Heart right ventricle (tissue), 16 donors: ENCODE measurements at regions of chrX and their contacts with region 1.

Region 1: DNA sequence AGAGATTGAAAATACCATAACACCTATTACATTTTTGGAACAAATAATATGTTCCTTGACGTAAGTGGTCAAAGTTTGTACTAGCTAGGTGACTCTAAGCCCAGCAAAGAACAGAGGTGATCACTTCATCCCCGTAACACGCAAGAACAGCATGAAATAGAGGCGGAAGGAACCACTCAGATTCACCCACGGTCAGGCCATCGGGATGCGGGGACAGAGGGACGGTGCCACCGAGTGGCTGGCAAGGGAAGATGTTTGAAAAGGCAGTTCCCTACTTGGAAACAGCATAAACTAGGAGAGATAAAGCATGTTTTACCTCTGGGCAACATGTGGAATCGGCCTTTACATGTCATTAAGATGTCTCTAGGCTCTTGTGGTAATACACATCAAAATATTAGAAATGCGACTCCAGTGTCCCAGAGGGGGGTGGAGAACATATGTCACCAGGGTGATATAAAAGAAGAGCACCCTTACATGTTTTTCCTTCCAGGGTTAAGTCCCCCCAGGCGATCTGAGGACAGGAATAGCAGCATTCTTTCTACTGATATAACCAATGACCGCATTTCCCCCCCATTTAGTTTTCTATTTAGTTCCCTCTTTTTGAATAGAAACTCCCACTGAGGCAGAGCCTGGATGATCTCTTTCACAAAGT is 84.0 kb downstream of the PHKA2 start:
- DNase-seq: no peak
- ATAC-seq: peak in 1 of 8 donors; percentile 43
- H3K4me3 ChIP-seq: no peak overlapping the region
- H3K27ac ChIP-seq: no peak overlapping the region
- H3K4me1 ChIP-seq: peaks cover 0 to 16% (median 7%) of the 10 kb centered on the region in 9 donors
- H3K27me3 ChIP-seq: no peaks in the 10 kb centered on the region
- CTCF ChIP-seq: peak; percentile 9 to 57 (median 38)

Region 2: DNA sequence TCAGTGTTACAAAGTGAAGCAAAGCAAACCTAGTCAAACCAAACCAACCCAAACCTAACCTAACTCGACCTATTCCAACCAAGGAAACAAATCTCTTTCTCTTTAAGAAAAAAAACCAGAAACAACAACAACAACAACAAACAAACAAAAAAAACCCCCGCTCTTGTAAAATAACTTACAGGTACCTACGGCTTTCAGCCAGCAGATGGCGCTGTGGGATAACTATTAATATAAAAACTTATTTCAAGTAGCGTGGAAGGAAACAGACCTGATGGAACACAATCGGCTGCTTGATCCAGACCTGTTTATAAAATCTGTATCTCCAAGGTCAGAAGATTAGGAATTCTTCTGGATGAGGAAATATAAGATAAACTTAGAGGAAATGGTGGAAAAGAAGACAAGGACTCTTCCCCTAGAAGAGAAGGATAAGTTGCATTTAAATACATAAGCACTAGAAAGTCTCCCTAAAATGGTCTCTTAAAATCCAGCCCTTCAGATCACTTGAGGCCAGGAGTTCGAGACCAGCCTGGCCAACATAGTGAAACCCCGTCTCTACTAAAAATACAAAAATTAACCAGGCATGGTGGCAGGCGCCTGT is 508.9 kb before region 1 on chrX:
- intact Hi-C with region 1: loop called in 3 of 10 experiments (anchors 5 to 10 kb)
- DNase-seq: peak; percentile 26 to 36
- ATAC-seq: no peak
- H3K4me3 ChIP-seq: no peak overlapping the region
- H3K27ac ChIP-seq: no peak overlapping the region
- H3K4me1 ChIP-seq: no peaks in the 10 kb centered on the region
- H3K27me3 ChIP-seq: no peaks in the 10 kb centered on the region
- CTCF ChIP-seq: peak; percentile 47 to 81 (median 71)

Region 3: GRCh38 chrX:18401848-18402213 is 498.1 kb before region 1 on chrX:
- intact Hi-C with region 1: loop called in 5 of 10 experiments (anchors 5 to 10 kb)
- DNase-seq: no peak
- ATAC-seq: no peak
- H3K4me3 ChIP-seq: no peak overlapping the region
- H3K27ac ChIP-seq: no peak overlapping the region
- H3K4me1 ChIP-seq: no peaks in the 10 kb centered on the region
- H3K27me3 ChIP-seq: no peaks in the 10 kb centered on the region
- CTCF ChIP-seq: no peak

Region 4: DNA sequence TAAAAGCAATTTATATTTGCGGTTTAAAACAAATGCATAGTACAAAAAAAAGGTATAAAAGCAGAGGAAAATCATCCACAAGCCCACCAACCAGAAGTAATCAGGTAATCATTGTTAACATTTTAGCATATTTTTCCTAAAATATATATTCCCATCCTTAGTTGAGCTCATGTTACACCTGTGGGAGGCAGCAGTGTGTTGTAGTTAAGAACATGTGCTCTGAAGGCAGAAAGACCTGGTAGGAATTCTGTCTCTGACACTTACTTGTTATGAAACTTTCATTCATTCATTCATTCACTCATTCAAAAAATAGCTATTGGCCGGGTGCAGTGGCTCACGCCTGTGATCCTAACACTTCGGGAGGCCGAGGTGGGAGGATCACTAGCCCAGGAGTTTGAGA is 489.9 kb before region 1 on chrX:
- intact Hi-C with region 1: loop called in 7 of 10 experiments (anchors 5 to 10 kb)
- DNase-seq: no peak
- ATAC-seq: peak in 1 of 8 donors; percentile 28
- H3K4me3 ChIP-seq: no peak overlapping the region
- H3K27ac ChIP-seq: no peak overlapping the region
- H3K4me1 ChIP-seq: no peaks in the 10 kb centered on the region
- H3K27me3 ChIP-seq: peaks cover 0 to 5% (median 0%) of the 10 kb centered on the region in 7 donors
- CTCF ChIP-seq: peak in 6 of 9 donors; percentile 23 to 48 (median 46)

Region 5: GRCh38 chrX:18415386-18415785 is 484.5 kb before region 1 on chrX:
- intact Hi-C with region 1: loop called in 6 of 10 experiments (anchors 5 to 10 kb)
- DNase-seq: no peak
- ATAC-seq: no peak
- H3K4me3 ChIP-seq: no peak overlapping the region
- H3K27ac ChIP-seq: no peak overlapping the region
- H3K4me1 ChIP-seq: no peaks in the 10 kb centered on the region
- H3K27me3 ChIP-seq: peaks cover 0 to 9% (median 0%) of the 10 kb centered on the region in 7 donors
- CTCF ChIP-seq: no peak

Region 6: DNA sequence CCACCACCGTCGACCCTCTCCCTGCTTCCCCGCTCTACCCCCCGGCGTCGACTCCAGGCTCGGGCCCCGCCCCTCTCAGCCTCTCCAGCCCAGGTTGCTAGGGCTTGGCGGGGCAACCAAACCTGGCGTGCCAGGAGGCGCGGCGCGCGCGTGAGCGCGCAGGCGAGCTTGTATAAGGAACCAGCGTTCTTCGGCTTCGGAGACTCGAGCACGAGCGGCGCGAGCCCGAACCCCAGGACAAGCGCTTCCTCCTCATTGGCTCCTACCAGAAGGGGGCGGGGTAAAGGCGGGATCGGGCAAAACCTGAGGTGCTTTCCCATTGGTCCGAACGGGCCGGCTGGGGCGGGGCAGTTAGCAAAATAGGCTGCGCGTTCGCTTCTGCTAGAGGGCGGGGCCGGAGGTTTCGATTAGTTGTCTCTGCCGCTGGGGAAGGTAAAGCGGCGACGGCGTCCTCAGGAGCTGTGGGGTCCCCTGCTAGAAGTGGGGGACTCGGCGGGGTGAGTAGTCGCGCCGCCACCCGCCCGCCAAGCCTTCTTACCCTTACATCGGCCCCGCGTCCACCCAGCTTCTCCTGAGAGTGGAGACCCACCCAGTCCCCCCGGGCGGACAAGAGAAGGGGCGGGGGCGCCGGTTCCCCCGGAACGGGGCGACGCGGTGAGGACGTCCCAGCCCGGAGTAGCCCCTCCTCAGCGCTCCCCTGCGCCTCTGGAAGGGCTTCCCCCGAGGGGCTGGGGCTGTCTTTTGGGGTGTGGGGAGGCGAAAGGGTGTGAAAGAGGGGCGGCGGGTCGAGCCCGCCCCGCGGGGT is 474.5 kb before region 1 on chrX and contains the start of gene CDKL5:
- intact Hi-C with region 1: loop called in 1 of 10 experiments (anchors 5 kb)
- DNase-seq: peak; percentile 95 to 97
- ATAC-seq: peak; percentile 97 to 99 (median 98)
- H3K4me3 ChIP-seq: peak within 1 kb of the TSS; percentile 65 to 92 (median 80)
- H3K27ac ChIP-seq: peak within 1 kb of the TSS; percentile 64 to 87 (median 80)
- H3K4me1 ChIP-seq: peaks cover 0 to 20% (median 0%) of the 10 kb centered on the region in 9 donors
- H3K27me3 ChIP-seq: peaks cover 0 to 61% (median 0%) of the 10 kb centered on the region in 7 donors
- CTCF ChIP-seq: peak in 1 of 9 donors; percentile 18
- total RNA-seq, gene CDKL5: 9.2 to 12.6 (median 10.0) TPM

Region 7: DNA sequence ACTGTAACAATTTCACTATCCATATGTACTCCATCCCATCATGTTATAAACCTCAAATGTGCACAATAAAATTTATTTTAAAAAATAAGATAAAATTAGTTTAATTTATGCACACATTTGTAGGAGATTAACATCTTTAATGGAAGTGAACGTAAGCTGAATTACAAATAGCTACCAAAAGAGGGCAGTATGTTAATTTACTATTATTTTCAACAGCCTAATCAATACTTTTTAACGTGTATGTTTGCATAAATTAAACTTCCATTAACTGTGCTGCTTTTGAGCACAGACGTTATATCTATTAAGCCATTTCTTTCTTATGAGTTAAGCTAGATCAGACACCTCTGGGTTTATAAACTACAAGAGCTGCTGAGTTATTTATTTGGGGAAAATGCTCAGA is 140.5 kb after region 1 on chrX:
- intact Hi-C with region 1: no loop called
- DNase-seq: no peak
- ATAC-seq: no peak
- H3K4me3 ChIP-seq: no peak overlapping the region
- H3K27ac ChIP-seq: no peak overlapping the region
- H3K4me1 ChIP-seq: no peaks in the 10 kb centered on the region
- H3K27me3 ChIP-seq: no peaks in the 10 kb centered on the region
- CTCF ChIP-seq: peak in 5 of 9 donors; percentile 33 to 45 (median 38)